ENCODE measurements at regions of chr9 and their contacts with region 1.

Region 1: GRCh38 chr9:68895741-68896478 is 118.0 kb downstream of the PRKACG start:
- DNase-seq: no peak
- H3K4me3 Mint-ChIP-seq: peak overlapping the region; percentile 61
- H3K27ac Mint-ChIP-seq: peak overlapping the region; percentile 89
- H3K4me1 Mint-ChIP-seq: peaks cover 42% of the 10 kb centered on the region
- H3K27me3 Mint-ChIP-seq: no peaks in the 10 kb centered on the region

Region 2: GRCh38 chr9:68979538-68980314 is 83.8 kb after region 1 on chr9:
- CTCF ChIA-PET with region 1: no interaction called
- intact Hi-C with region 1: loop called (anchors 1 kb)
- DNase-seq: peak; percentile 69
- H3K4me3 Mint-ChIP-seq: peak overlapping the region; percentile 28
- H3K27ac Mint-ChIP-seq: peak overlapping the region; percentile 76
- H3K4me1 Mint-ChIP-seq: peaks cover 41% of the 10 kb centered on the region
- H3K27me3 Mint-ChIP-seq: peaks cover 5% of the 10 kb centered on the region

Region 3: GRCh38 chr9:69027355-69028096 is 131.6 kb after region 1 on chr9:
- CTCF ChIA-PET with region 1: interaction called, 5 read pairs
- intact Hi-C with region 1: loop called (anchors 5 kb)
- DNase-seq: peak; percentile 65
- H3K4me3 Mint-ChIP-seq: no peak overlapping the region
- H3K27ac Mint-ChIP-seq: no peak overlapping the region
- H3K4me1 Mint-ChIP-seq: peaks cover 36% of the 10 kb centered on the region
- H3K27me3 Mint-ChIP-seq: no peaks in the 10 kb centered on the region